ENCODE measurements at regions of chr19 and their contacts with region 1.

Region 1: GRCh38 chr19:2016041-2016807 is 710 bp upstream of the BTBD2 start:
- DNase-seq: peak in 1 of 2 donors; percentile 89
- H3K4me3 ChIP-seq: peak overlapping the region; percentile 28 to 35
- H3K27ac ChIP-seq: peak overlapping the region; percentile 29 to 76
- H3K4me1 ChIP-seq: peaks cover 5 to 13% of the 10 kb centered on the region in 2 donors
- H3K27me3 ChIP-seq: no peaks in the 10 kb centered on the region
- CTCF ChIP-seq: no peak

Region 2: DNA sequence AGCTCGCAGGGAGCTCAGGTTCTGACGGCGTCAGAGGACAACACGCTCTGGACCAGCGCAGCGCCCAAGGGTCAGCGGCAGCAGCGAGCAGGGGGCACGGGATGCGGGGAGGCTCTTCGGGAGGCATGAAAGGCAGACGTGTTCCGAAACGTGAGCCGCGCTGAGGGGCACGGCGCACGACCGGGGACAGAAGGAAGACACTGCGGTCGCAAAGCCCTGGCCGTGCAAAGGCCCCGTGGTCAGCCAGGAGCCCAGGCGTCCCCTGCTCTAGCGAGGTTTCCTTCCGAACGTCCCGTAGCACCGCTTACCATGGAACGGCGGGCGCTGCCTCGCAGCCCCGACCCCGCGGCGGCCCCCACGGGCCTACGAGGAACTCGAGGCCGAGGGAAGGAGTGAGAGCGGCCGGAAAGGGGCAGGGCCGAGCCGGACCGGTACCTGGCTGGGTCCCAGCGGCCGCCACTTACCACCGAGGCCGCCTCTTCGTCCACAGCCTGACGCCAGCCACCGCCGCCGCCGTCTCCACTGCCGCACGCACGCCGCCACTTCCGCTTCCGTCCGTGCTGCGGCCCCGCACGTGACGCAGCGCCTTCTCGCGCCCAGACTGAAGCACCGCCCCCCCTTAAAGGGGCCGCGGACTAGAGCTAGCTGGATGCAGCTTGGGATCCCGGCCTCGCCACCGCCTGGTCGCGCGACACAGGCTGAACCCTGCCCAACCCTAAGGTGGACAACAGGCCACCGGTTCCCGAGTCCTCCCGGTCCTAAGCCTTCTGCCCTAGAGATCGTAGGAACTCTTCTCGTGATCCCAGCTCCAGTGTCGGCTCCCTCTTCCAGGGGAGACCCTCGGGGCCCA is 140.4 kb before region 1 on chr19:
- intact Hi-C with region 1: no loop called
- DNase-seq: peak; percentile 71 to 96
- H3K4me3 ChIP-seq: peak overlapping the region; percentile 90 to 98
- H3K27ac ChIP-seq: peak overlapping the region; percentile 93 to 98
- H3K4me1 ChIP-seq: peaks cover 17 to 31% of the 10 kb centered on the region in 2 donors
- H3K27me3 ChIP-seq: no peaks in the 10 kb centered on the region
- CTCF ChIP-seq: no peak

Region 3: GRCh38 chr19:1905071-1905862 is 111.0 kb before region 1 on chr19 and contains the starts of genes ADAT3 and SCAMP4:
- intact Hi-C with region 1: loop called (anchors 10 kb)
- DNase-seq: peak; percentile 94 to 99
- H3K4me3 ChIP-seq: peak within 1 kb of the TSS; percentile 73 to 82
- H3K27ac ChIP-seq: peak within 1 kb of the TSS; percentile 74 to 81
- H3K4me1 ChIP-seq: peaks cover 8 to 13% of the 10 kb centered on the region in 2 donors
- H3K27me3 ChIP-seq: no peaks in the 10 kb centered on the region
- CTCF ChIP-seq: no peak
- total RNA-seq, gene ADAT3: 18.4 TPM
- total RNA-seq, gene SCAMP4: 322 TPM

Region 4: GRCh38 chr19:1929021-1929742 is 87.0 kb before region 1 on chr19:
- intact Hi-C with region 1: no loop called
- DNase-seq: peak in 1 of 2 donors; percentile 90
- H3K4me3 ChIP-seq: peak overlapping the region; percentile 36 to 59
- H3K27ac ChIP-seq: no peak overlapping the region
- H3K4me1 ChIP-seq: peaks cover 3 to 9% of the 10 kb centered on the region in 2 donors
- H3K27me3 ChIP-seq: no peaks in the 10 kb centered on the region
- CTCF ChIP-seq: peak; percentile 90 to 93 (median 92)

Region 5: DNA sequence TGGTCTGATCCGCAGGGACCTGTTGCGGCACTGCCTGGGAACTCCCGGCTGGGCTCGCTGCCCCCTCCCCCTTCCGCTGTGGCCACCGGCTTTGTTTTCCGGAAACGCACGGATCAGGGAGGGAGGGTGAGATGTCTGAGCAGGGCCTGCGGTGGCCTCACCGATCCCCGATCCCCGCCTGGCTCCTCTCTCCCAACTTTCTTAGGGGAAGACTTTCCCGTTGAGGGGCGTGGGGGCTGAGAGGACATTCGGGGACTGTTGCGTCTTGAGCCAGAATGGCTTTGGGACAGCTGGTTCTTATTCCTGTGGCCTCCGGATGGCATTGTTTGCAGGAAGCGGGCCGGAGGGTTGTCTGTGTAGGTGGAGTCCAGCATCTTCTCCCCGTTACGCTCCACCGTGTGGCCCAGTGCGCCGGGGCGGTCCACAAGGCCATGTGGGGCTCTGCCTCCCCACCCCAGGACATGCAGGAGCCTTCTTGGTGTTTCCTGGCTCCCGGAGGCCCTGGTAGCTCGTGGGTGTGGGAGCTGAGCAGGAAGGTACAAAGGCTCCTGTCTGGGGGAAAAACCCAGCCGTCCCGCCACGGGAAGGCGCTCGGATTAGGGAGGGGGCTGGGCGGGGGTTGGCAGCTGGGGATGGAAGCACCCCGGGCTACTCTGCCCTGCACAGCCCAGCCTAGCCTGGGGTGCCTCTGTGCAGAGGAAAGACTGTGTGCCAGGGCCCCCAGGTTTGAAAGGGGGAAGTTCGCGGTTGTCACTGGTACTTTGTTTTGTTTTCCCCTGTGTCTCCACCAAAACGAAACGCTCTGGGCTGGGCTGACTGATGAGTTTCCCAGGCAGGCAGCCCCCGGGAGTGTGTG is 73.9 kb before region 1 on chr19:
- intact Hi-C with region 1: loop called (anchors 2 kb)
- DNase-seq: peak in 1 of 2 donors; percentile 89
- H3K4me3 ChIP-seq: peak overlapping the region; percentile 72 to 95
- H3K27ac ChIP-seq: peak overlapping the region; percentile 87 to 100
- H3K4me1 ChIP-seq: peaks cover 11 to 14% of the 10 kb centered on the region in 2 donors
- H3K27me3 ChIP-seq: no peaks in the 10 kb centered on the region
- CTCF ChIP-seq: no peak

Region 6: GRCh38 chr19:2032296-2032941 is 16.2 kb after region 1 on chr19:
- intact Hi-C with region 1: loop called (anchors 1 kb)
- DNase-seq: peak; percentile 92 to 99
- H3K4me3 ChIP-seq: peak overlapping the region; percentile 32 to 43
- H3K27ac ChIP-seq: peak overlapping the region; percentile 88 to 92
- H3K4me1 ChIP-seq: peaks cover 0 to 16% of the 10 kb centered on the region in 2 donors
- H3K27me3 ChIP-seq: no peaks in the 10 kb centered on the region
- CTCF ChIP-seq: no peak

Region 7: GRCh38 chr19:2061495-2062381 is 45.5 kb after region 1 on chr19:
- intact Hi-C with region 1: loop called (anchors 1 kb)
- DNase-seq: peak; percentile 97 to 99
- H3K4me3 ChIP-seq: peak overlapping the region; percentile 70 to 85
- H3K27ac ChIP-seq: peak overlapping the region; percentile 98 to 99
- H3K4me1 ChIP-seq: peaks cover 12 to 36% of the 10 kb centered on the region in 2 donors
- H3K27me3 ChIP-seq: no peaks in the 10 kb centered on the region
- CTCF ChIP-seq: no peak

Region 8: GRCh38 chr19:2151339-2152229 is 135.4 kb after region 1 on chr19 and contains the start of gene AP3D1:
- intact Hi-C with region 1: loop called (anchors 5 kb)
- DNase-seq: peak; percentile 99 to 100
- H3K4me3 ChIP-seq: peak within 1 kb of the TSS; percentile 82 to 96
- H3K27ac ChIP-seq: peak within 1 kb of the TSS; percentile 83 to 87
- H3K4me1 ChIP-seq: peaks cover 14 to 31% of the 10 kb centered on the region in 2 donors
- H3K27me3 ChIP-seq: no peaks in the 10 kb centered on the region
- CTCF ChIP-seq: peak in 1 of 3 experiments; percentile 38
- total RNA-seq, gene AP3D1: 98.8 TPM

Region 9: DNA sequence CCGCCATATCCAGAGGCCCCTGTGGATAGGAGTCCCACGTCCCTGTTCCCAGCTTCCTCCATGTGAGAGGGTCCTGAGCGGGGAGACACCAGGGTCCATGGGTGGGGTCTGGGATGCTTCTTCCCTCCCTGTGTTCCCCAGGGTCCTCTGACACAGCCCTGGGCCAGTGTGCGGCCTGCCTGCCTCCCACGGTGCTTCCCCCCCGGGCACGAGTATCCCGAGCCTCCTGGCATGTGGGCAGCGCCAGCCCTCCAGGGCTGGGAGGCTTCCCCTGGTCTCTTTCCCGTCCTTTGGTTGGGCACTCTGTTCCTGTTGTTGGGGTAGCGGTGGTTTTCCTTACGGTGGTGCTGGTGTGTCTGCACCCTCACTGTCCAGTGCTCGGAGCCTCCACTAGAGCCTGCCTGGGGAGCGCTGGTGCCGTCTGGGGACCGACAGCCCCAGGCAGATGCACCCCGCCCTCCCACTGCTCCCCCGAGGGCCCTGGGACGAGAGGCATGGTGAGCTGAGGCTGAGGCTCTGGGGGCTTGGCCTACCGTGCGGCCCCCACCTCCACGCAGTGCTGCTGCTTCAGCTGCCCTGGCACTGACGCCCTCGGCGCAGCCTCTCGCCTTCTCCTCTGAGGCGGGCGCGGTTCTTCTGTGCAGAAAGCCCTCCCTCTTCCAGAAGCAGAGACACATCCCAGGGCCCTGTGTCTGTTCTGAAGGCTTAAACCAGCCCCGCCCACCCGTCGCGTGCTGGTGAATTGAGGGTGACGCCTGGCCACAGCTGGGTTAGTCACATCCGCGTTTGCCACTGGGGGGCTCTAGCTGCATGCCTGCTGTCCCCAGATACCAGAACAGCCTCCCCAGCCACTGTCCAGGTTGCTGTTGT is 192.0 kb after region 1 on chr19:
- intact Hi-C with region 1: no loop called
- DNase-seq: no peak
- H3K4me3 ChIP-seq: no peak overlapping the region
- H3K27ac ChIP-seq: no peak overlapping the region
- H3K4me1 ChIP-seq: no peaks in the 10 kb centered on the region
- H3K27me3 ChIP-seq: no peaks in the 10 kb centered on the region
- CTCF ChIP-seq: no peak